Heart left ventricle (tissue), 16 donors: ENCODE measurements at regions of chr22 and their contacts with region 1.

Region 1: DNA sequence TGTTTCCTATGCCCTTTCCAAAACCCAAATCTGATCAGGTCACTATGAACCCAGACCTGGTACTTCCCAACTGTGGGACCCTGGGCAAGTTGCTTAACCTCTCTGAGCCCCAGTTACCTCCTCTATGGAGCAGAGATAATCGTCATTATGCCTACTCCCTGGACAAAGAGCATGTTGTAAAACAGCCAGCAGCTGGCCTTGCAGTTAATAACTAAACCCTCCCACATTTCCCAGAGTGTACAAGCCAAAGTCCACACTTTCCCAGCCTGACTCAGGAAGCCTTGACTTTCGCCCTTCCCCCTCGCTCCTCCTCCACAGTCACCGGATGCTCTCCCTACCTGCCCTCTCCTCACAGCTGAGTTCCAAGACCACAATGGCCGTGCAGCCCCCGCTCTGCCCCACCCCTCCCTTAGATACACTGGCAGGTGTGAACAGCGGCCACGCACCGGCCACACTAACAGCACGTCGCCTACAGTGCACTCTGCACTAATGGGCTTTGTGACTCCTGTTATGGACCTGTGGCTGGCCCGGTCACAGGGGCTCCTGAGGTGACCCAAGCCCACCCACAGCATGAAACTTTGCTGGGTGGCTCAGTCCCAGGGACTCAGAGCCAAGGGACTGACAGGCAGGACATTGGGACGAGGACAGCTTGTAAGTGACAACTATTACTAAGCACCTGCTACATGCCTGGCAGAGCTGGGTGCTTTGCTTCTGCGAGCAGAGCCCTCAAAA is 15.6 kb upstream of the MFNG start:
- DNase-seq: peak in 4 of 5 donors; percentile 73 to 87 (median 81)
- ATAC-seq: peak; percentile 73 to 87 (median 76)
- H3K4me3 ChIP-seq: peak overlapping the region in 4 of 12 donors; percentile 7 to 25 (median 18)
- H3K27ac ChIP-seq: peak overlapping the region; percentile 47 to 94 (median 78)
- H3K4me1 ChIP-seq: peaks cover 0 to 89% (median 52%) of the 10 kb centered on the region in 12 donors
- H3K27me3 ChIP-seq: peaks cover 0 to 5% (median 0%) of the 10 kb centered on the region in 9 donors
- CTCF ChIP-seq: no peak
- POLR2A ChIP-seq: no peak

Region 2: DNA sequence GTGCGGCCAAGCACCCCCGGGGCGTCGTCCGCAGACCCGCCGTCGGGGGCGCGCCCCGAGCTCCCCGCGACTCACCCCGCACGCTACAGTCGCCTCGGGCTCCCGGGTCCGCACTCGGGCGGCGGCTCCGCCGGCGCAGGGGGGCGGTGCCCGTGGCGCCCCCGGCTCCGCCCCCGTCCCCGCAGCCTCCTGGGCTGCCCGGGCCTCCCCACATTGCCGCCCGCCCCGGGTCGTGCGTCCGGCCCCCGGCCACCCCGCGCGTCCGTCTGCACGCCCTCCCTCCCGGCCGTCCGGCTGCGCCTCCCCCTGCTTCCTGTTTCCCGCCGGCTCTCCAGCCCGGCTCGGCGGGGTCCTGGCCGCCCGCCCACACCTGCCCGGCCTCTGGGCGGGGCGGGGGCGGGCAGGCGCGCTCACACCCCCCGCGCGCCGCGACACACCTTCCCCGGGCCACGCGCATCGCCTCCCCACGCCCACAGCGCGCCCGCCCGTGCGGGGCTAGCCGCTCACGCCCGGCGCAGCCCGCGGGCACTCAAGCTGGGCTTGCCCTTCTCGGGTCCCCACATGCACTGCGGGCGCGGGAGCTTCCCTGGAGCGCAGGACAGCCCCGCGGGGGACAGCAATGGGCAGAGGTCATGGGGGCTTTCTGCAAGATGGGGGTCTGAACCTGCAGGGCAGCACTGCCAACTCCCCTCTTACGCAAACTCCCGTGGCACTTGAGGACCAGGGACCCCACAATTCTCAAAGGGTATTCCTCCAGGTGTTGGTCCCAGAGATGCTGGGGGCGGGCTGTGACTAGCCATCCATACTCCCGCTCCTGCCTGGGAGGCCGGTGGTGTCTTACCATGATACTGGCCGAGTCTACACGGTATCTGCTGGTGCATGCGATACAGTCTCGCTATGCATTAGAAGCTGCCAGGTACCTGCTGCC is 17.8 kb after region 1 on chr22 and contains the start of gene CARD10:
- intact Hi-C with region 1: loop called in 1 of 10 experiments (anchors 1 kb)
- DNase-seq: peak in 3 of 5 donors; percentile 50 to 76 (median 71)
- ATAC-seq: peak; percentile 21 to 70 (median 65)
- H3K4me3 ChIP-seq: peak within 1 kb of the TSS; percentile 42 to 93 (median 66)
- H3K27ac ChIP-seq: peak within 1 kb of the TSS; percentile 60 to 91 (median 86)
- H3K4me1 ChIP-seq: peaks cover 0 to 22% (median 16%) of the 10 kb centered on the region in 12 donors
- H3K27me3 ChIP-seq: peaks cover 0 to 32% (median 16%) of the 10 kb centered on the region in 9 donors
- CTCF ChIP-seq: no peak
- POLR2A ChIP-seq: peak in 1 of 2 donors; percentile 14
- total RNA-seq, gene CARD10: 5.2 to 12.6 (median 8.1) TPM